PC-9 (cell line): ENCODE measurements at regions of chr2 and their contacts with region 1.

Region 1: GRCh38 chr2:25700221-25700660 is 26.9 kb upstream of the DTNB start:
- DNase-seq: peak; percentile 25 to 94
- H3K4me3 ChIP-seq: no peak overlapping the region
- H3K27ac ChIP-seq: no peak overlapping the region
- H3K4me1 ChIP-seq: peaks cover 34% of the 10 kb centered on the region
- H3K27me3 ChIP-seq: no peaks in the 10 kb centered on the region
- CTCF ChIP-seq: peak; percentile 88

Region 2: DNA sequence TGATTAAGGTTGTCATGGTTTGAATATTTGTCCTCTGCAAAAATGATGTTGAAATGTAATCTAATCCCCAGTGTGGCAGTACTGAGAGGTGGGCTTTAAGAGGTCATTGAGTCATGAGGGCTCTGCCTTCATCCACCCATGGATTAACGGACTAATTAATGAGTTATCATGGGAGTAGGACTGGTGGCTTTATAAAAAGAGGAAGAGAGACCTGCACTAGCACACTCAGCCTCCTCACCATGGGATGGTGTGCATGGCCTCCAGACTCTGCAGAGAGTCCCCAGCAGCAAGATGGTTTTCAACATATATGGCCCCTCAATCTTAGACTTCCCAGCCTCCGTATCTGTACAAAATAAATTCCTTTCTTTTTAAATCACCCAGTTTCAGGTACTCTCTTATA is 67.8 kb before region 1 on chr2:
- CTCF ChIA-PET with region 1: interaction called, 13 read pairs
- POLR2A ChIA-PET with region 1: interaction called, 4 read pairs
- intact Hi-C with region 1: no loop called
- DNase-seq: no peak
- H3K4me3 ChIP-seq: no peak overlapping the region
- H3K27ac ChIP-seq: no peak overlapping the region
- H3K4me1 ChIP-seq: no peaks in the 10 kb centered on the region
- H3K27me3 ChIP-seq: no peaks in the 10 kb centered on the region
- CTCF ChIP-seq: no peak

Region 3: GRCh38 chr2:25639171-25639570 is 61.1 kb before region 1 on chr2:
- CTCF ChIA-PET with region 1: interaction called, 3 read pairs
- POLR2A ChIA-PET with region 1: no interaction called
- intact Hi-C with region 1: loop called (anchors 2 kb)
- DNase-seq: no peak
- H3K4me3 ChIP-seq: no peak overlapping the region
- H3K27ac ChIP-seq: no peak overlapping the region
- H3K4me1 ChIP-seq: peaks cover 12% of the 10 kb centered on the region
- H3K27me3 ChIP-seq: no peaks in the 10 kb centered on the region
- CTCF ChIP-seq: no peak